ENCODE measurements at regions of chr19 and their contacts with region 1.

Region 1: GRCh38 chr19:46932346-46932745 is 71.5 kb downstream of the ARHGAP35 start:
- DNase-seq: peak; percentile 62
- ATAC-seq: peak; percentile 36; the same call in 1 of the 2 replicates
- H3K4me3 ChIP-seq: no peak overlapping the region
- H3K27ac ChIP-seq: no peak overlapping the region
- H3K4me1 ChIP-seq: peaks cover 21% of the 10 kb centered on the region
- H3K27me3 ChIP-seq: no peaks in the 10 kb centered on the region
- CTCF ChIP-seq: no peak
- POLR2A ChIP-seq: no peak
- RAD21 ChIP-seq: no peak

Region 2: GRCh38 chr19:46878613-46879375 is 53.6 kb before region 1 on chr19:
- CTCF ChIA-PET with region 1: no interaction called
- POLR2A ChIA-PET with region 1: no interaction called
- dilution Hi-C with region 1: no loop called
- in situ Hi-C with region 1: no loop called
- intact Hi-C with region 1: loop called (anchors 5 kb)
- DNase-seq: peak; percentile 93
- ATAC-seq: peak; percentile 85
- H3K4me3 ChIP-seq: no peak overlapping the region
- H3K27ac ChIP-seq: peak overlapping the region; percentile 51
- H3K4me1 ChIP-seq: peaks cover 10% of the 10 kb centered on the region; the same call in 1 of the 2 replicates
- H3K27me3 ChIP-seq: no peaks in the 10 kb centered on the region
- CTCF ChIP-seq: no peak
- POLR2A ChIP-seq: no peak
- RAD21 ChIP-seq: peak; percentile 24

Region 3: GRCh38 chr19:46963093-46963734 is 30.9 kb after region 1 on chr19:
- CTCF ChIA-PET with region 1: no interaction called
- POLR2A ChIA-PET with region 1: no interaction called
- dilution Hi-C with region 1: no loop called
- in situ Hi-C with region 1: no loop called
- intact Hi-C with region 1: no loop called
- DNase-seq: peak; percentile 94
- ATAC-seq: peak; percentile 82
- H3K4me3 ChIP-seq: no peak overlapping the region
- H3K27ac ChIP-seq: peak overlapping the region; percentile 86
- H3K4me1 ChIP-seq: peaks cover 16% of the 10 kb centered on the region
- H3K27me3 ChIP-seq: no peaks in the 10 kb centered on the region
- CTCF ChIP-seq: no peak
- POLR2A ChIP-seq: peak; percentile 34; the same call in 1 of the 2 replicates
- RAD21 ChIP-seq: no peak

Region 4: GRCh38 chr19:46975925-46976782 is 43.8 kb after region 1 on chr19:
- CTCF ChIA-PET with region 1: no interaction called
- POLR2A ChIA-PET with region 1: no interaction called
- dilution Hi-C with region 1: no loop called
- in situ Hi-C with region 1: no loop called
- intact Hi-C with region 1: loop called (anchors 2 kb)
- DNase-seq: peak; percentile 93
- ATAC-seq: peak; percentile 83
- H3K4me3 ChIP-seq: no peak overlapping the region
- H3K27ac ChIP-seq: peak overlapping the region; percentile 79
- H3K4me1 ChIP-seq: peaks cover 32% of the 10 kb centered on the region
- H3K27me3 ChIP-seq: no peaks in the 10 kb centered on the region
- CTCF ChIP-seq: no peak
- POLR2A ChIP-seq: 0 out of 2 replicates have a peak, but pooled peaks have one; percentile 19
- RAD21 ChIP-seq: 0 out of 2 replicates have a peak, but pooled peaks have one; percentile 14